ENCODE measurements at regions of chr7 and their contacts with region 1.

Region 1: DNA sequence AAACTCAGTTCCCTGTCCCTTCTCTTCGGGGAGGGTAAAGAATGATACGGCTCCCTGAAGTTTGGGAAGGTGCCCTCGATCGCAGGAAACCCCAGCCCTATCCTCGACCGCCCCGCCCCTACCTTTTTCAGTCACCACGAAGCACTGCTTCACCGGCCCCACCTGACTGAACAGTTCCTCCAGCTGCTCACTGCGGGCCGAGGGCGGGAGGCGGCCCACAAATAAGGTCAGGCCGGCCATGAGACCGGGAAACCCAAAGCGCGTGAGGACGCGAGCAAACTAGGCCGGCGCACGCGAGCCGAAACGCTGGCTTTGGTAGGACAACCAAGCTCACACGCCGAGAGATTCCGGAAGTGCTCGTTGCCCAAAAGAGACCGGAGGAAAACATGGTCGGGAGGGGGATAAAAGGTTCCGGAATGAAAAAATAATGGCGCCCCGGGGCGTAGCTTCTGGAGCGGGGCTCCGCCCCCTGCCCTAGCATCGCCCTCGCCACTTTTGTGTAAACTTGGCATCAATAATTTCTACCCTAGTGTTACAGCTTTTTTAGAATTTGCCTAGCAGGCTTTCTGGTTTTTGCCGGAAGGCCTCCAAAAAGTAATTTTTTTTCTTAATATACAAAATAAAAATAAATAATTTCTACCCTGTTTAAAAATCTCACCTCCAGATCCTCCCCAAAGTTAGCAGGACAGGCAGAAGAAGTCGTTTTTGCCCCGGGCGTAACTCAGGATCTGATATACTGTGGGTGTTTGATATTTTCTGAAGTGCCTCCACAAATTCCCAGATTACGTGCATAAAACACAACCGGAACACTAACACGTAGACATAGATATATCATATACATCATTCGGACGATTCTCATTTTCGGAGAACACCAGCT is at the start of gene RBM28:
- DNase-seq: peak; percentile 40
- H3K4me3 ChIP-seq: peak within 1 kb of the TSS; percentile 90
- CTCF ChIP-seq: no peak

Region 2: GRCh38 chr7:128322040-128322643 is 21.6 kb before region 1 on chr7:
- CTCF ChIA-PET with region 1: interaction called, 18 read pairs
- POLR2A ChIA-PET with region 1: interaction called, 3 read pairs
- DNase-seq: no peak
- H3K4me3 ChIP-seq: no peak overlapping the region
- CTCF ChIP-seq: peak; percentile 44

Region 3: DNA sequence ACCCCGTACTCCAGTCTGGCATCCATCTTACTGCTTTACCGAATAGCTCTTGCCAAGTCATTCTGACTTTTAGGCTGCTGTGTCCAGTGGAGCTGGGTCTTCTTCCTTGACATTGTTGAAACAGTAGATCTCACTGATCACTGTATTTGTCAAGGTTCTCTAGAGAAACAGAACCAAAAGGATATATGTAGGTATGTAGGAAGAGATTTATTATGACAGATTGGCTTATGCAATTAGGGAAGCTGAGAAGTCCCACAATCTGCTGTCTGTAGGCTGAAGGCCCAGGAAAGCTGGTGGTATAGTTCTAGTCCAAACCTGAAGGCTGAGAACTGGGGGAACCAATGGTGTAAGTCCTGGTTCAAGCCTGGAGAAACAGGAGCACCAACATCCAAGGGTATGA is 29.8 kb after region 1 on chr7:
- CTCF ChIA-PET with region 1: interaction called, 42 read pairs
- POLR2A ChIA-PET with region 1: no interaction called
- DNase-seq: no peak
- H3K4me3 ChIP-seq: no peak overlapping the region
- CTCF ChIP-seq: no peak

Region 4: GRCh38 chr7:128398016-128398840 is 54.4 kb after region 1 on chr7:
- CTCF ChIA-PET with region 1: interaction called, 37 read pairs
- POLR2A ChIA-PET with region 1: no interaction called
- DNase-seq: no peak
- H3K4me3 ChIP-seq: no peak overlapping the region
- CTCF ChIP-seq: peak; percentile 86

Region 5: GRCh38 chr7:128455551-128456254 is 111.9 kb after region 1 on chr7 and contains the start of gene HILPDA:
- CTCF ChIA-PET with region 1: interaction called, 17 read pairs
- POLR2A ChIA-PET with region 1: interaction called, 3 read pairs
- DNase-seq: peak; percentile 82
- H3K4me3 ChIP-seq: peak within 1 kb of the TSS; percentile 99
- CTCF ChIP-seq: no peak

Measured in AG04449 (cell line).